Esophagus muscularis mucosa (tissue), 4 donors: ENCODE measurements at regions of chr1 and their contacts with region 1.

Region 1: DNA sequence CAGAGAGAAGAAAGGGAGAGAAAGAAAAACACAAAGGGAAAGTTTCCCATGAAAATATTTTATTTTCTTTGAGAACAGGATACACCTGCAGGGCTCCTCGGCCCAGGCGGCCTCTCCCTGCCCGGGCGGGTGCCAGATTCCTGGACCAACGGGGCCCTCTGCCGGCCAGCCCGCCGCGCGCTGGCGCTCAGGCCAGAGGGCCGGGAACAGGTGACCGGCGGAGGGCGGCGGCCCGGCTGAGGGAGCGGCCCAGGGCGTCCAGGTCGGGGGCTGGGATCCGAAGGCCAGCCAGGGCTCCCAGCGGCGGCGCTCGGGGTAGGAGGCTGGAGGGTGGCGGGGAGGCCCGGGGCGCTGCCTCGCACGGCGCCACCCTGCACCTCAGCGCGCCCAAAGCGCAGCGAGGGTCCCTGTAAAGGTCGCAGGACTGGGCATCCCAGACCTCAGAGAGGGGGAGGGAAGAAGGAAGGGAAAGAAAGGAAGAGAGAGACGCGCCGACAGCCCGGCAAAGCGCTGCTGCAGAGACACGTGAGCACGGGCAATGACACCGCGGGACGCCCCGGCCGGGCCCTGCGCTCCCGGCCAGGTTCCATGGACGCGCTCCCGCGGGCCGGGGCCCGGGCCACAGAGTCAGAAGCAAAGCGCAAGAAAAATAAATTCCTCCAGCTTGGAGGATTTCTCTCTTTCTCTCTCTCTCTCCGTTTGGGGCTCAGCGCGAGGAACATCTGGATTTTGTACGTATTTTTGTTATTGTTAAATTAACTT is 927 bp downstream of the WNT9A start:
- DNase-seq: no peak
- H3K4me3 ChIP-seq: peak overlapping the region; percentile 64 to 84 (median 70)
- H3K27ac ChIP-seq: peak overlapping the region; percentile 86 to 91 (median 88)
- H3K4me1 ChIP-seq: peaks cover 45 to 73% (median 72%) of the 10 kb centered on the region in 4 donors
- H3K27me3 ChIP-seq: peaks cover 0 to 6% (median 0%) of the 10 kb centered on the region in 4 donors
- CTCF ChIP-seq: peak; percentile 83 to 89 (median 85)
- EP300 ChIP-seq: no peak
- POLR2A ChIP-seq: no peak

Region 2: GRCh38 chr1:227482023-227482299 is 464.8 kb before region 1 on chr1:
- intact Hi-C with region 1: loop called (anchors 2 kb)
- DNase-seq: no peak
- H3K4me3 ChIP-seq: no peak overlapping the region
- H3K27ac ChIP-seq: no peak overlapping the region
- H3K4me1 ChIP-seq: no peaks in the 10 kb centered on the region
- H3K27me3 ChIP-seq: peaks cover 0 to 8% (median 0%) of the 10 kb centered on the region in 4 donors
- CTCF ChIP-seq: no peak
- EP300 ChIP-seq: no peak
- POLR2A ChIP-seq: no peak

Region 3: GRCh38 chr1:227542143-227543120 is 404.4 kb before region 1 on chr1:
- intact Hi-C with region 1: loop called (anchors 5 kb)
- DNase-seq: no peak
- H3K4me3 ChIP-seq: peak overlapping the region; percentile 67 to 84 (median 76)
- H3K27ac ChIP-seq: peak overlapping the region; percentile 66 to 82 (median 72)
- H3K4me1 ChIP-seq: peaks cover 5 to 23% (median 20%) of the 10 kb centered on the region in 4 donors
- H3K27me3 ChIP-seq: no peaks in the 10 kb centered on the region
- CTCF ChIP-seq: peak in 2 of 3 experiments; percentile 92 to 98
- EP300 ChIP-seq: no peak
- POLR2A ChIP-seq: no peak

Region 4: GRCh38 chr1:227762233-227762911 is 184.4 kb before region 1 on chr1:
- intact Hi-C with region 1: loop called (anchors 2 kb)
- DNase-seq: peak; percentile 94
- H3K4me3 ChIP-seq: peak overlapping the region in 1 of 4 donors; percentile 19
- H3K27ac ChIP-seq: peak overlapping the region; percentile 10 to 86 (median 72)
- H3K4me1 ChIP-seq: peaks cover 46 to 68% (median 57%) of the 10 kb centered on the region in 4 donors
- H3K27me3 ChIP-seq: no peaks in the 10 kb centered on the region
- CTCF ChIP-seq: peak; percentile 87 to 93 (median 89)
- EP300 ChIP-seq: no peak
- POLR2A ChIP-seq: no peak

Region 5: DNA sequence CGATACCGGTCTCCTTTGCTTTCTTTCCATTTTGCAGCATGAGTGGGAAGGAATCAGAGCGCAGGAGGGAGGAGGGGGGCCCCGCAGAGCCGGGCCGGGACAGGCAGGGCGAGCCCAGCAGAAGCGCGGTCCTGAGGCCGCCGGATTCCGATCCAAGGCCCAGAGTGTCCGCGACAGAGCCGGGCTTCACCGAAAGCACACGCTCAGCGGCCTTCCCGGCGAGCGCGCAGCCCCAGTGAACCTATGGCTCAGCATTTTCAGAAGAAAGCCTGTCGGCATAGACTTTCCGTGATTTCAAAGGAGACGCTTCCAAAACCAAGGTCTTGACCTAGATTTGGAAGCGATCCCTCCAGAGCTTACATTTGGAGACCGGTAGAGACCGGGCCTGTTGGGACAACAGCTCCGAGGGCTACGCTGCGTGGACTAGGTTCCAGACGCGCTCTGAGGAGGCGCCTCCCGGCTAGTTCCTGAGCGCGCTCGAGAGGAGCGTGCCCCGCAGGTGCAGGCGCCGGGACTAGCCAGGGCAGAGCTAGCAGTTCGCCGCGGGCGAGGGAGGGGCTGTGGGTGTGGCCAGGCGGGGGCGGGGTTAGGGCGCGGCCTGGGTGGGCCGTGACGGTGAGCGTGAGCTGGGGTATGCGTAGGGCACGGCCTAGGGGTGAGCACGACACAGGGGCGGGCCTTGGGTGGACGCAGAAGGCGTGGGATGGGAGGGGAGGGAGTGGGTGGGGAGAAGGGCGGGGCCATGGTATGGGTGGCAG is 159.1 kb before region 1 on chr1:
- intact Hi-C with region 1: loop called (anchors 2 kb)
- DNase-seq: peak; percentile 97
- H3K4me3 ChIP-seq: peak overlapping the region; percentile 64 to 73 (median 66)
- H3K27ac ChIP-seq: peak overlapping the region; percentile 81 to 86 (median 82)
- H3K4me1 ChIP-seq: peaks cover 16 to 39% (median 29%) of the 10 kb centered on the region in 4 donors
- H3K27me3 ChIP-seq: no peaks in the 10 kb centered on the region
- CTCF ChIP-seq: no peak
- EP300 ChIP-seq: no peak
- POLR2A ChIP-seq: no peak

Region 6: GRCh38 chr1:227886993-227887696 is 59.7 kb before region 1 on chr1:
- intact Hi-C with region 1: loop called (anchors 5 kb)
- DNase-seq: peak; percentile 92
- H3K4me3 ChIP-seq: peak overlapping the region; percentile 65 to 76 (median 68)
- H3K27ac ChIP-seq: peak overlapping the region; percentile 94 to 97 (median 96)
- H3K4me1 ChIP-seq: peaks cover 24 to 40% (median 30%) of the 10 kb centered on the region in 4 donors
- H3K27me3 ChIP-seq: peaks cover 0 to 5% (median 0%) of the 10 kb centered on the region in 4 donors
- CTCF ChIP-seq: no peak
- EP300 ChIP-seq: no peak
- POLR2A ChIP-seq: no peak

Region 7: DNA sequence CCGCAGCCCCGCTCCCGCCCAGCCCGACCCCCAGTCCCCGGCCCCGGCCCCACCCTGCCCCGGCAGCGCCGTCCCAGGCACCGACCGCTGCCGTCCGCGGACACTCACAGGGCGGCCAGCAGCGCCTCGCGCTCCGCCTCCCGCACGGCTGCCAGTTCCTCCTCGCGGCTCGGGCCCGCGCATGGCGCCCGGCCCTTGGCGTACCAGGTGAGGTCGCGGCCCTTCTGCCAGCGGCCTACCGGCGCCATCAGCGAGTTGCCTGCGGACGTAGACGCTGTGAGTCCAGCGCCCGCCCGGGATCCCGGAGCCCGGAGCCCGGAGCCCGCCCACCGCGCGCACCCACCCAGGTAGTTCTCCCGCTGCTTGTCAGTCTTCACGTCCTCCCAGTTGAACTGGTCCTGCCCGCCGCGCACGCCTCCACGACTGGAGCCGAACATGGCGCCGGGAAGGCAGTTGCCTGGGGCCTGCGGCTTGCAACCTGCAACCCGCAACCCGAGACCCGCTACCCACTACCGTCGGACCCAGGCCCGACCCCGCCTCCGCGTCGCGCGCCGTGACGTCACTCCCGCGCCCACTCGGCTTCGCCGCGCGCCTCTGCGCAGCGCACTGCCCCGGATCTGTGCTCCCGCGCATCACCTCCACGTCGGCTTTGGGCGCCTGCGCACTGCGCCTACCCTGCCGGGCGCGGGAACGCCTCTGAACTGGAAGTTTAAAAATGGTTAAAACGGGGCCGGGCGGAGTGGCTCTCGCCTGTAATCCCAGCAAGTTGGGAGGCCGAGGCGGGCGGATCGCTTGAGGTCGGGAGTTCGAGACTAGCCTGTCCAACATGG is 156.2 kb after region 1 on chr1 and contains the start of gene C1orf35:
- intact Hi-C with region 1: loop called (anchors 5 kb)
- DNase-seq: peak; percentile 97
- H3K4me3 ChIP-seq: peak within 1 kb of the TSS; percentile 79 to 97 (median 87)
- H3K27ac ChIP-seq: peak within 1 kb of the TSS; percentile 88 to 97 (median 94)
- H3K4me1 ChIP-seq: peaks cover 24 to 46% (median 33%) of the 10 kb centered on the region in 4 donors
- H3K27me3 ChIP-seq: no peaks in the 10 kb centered on the region
- CTCF ChIP-seq: no peak
- EP300 ChIP-seq: no peak
- POLR2A ChIP-seq: peak; percentile 41
- total RNA-seq, gene C1orf35: 11.2 to 24.3 (median 11.9) TPM